Cardiac septum (tissue), 1 donor: ENCODE measurements at regions of chr11 and their contacts with region 1.

Region 1: DNA sequence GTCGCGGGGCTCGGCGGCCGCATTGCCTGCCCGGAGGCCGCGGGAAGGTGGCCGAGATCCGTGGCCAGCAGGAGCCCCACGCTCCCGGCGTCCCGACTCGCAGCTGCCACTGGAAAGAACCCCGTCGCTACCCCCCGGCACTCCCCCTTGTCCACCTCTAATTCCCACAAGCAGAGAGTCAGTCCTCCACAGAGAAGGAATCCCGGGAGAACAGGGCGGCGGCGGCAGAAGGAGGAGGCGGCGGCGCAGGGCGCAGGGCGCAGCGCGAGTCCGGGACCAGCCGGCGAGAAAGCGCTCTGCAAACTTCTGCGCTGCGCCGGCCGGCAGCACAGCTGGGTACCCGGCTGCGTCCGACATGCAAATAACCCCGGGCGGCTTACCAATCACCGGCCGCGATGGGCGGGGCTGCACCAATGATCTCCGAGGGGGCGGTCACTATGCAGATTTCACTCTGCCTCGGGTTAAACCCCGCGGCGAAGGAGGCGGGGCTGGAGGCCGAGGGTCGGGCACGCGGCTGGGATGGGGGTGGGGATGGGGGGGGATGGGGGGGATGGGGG is at the start of gene ABTB2:
- DNase-seq: peak; percentile 99
- total RNA-seq, gene ABTB2: 27.9 TPM

Region 2: GRCh38 chr11:33996498-33997454 is 361.0 kb before region 1 on chr11:
- intact Hi-C with region 1: loop called (anchors 2 kb)
- DNase-seq: no peak

Region 3: GRCh38 chr11:34051349-34052035 is 306.3 kb before region 1 on chr11 and contains the start of gene CAPRIN1:
- intact Hi-C with region 1: loop called (anchors 2 kb)
- DNase-seq: peak; percentile 94
- total RNA-seq, gene CAPRIN1: 108 TPM

Region 4: DNA sequence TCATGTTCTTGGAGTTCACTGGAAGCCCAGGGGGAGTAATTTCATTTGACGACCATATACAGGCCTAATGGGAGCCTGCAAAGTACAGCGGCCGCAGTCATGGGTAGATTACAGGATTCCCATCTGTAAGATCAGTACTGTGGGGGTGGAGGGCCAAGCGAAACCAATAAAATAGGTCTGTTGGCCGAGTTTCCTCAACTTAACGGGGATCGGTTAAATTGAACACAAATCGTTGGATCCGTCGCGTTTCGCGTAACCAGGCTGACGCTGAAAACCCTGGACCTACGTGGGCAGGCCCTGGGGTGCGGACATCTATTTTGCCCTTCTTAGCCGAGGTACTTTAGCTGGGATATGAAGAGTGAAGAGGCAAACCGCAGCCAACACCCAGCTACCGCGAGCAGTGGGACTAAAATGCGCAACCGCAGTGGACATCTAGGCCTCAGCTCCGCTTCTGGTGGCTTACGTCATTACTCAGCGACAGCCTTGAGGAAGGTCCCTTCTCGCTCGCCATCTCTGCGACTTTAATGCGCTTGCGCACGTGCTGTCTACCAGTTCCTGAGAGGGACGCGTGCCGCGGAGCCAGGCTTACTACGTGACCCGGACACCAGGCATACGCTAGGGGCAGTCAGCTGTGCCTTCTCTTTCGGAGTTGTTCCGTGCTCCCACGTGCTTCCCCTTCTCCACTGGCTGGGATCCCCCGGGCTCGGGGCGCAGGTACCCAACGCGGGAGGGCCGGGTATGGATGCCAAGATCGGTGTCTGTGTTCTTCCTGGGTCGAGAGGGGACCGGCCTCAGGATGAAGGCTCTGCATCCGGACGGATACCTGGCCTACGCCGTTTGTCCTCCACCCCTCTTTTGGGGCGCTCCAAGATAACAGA is 252.5 kb before region 1 on chr11 and contains the start of gene NAT10:
- intact Hi-C with region 1: loop called (anchors 5 kb)
- DNase-seq: peak; percentile 98
- total RNA-seq, gene NAT10: 23.2 TPM

Region 5: GRCh38 chr11:34174412-34175041 is 183.3 kb before region 1 on chr11:
- intact Hi-C with region 1: loop called (anchors 1 kb)
- DNase-seq: peak; percentile 89

Region 6: GRCh38 chr11:34243726-34244464 is 113.9 kb before region 1 on chr11:
- intact Hi-C with region 1: loop called (anchors 5 kb)
- DNase-seq: no peak

Region 7: DNA sequence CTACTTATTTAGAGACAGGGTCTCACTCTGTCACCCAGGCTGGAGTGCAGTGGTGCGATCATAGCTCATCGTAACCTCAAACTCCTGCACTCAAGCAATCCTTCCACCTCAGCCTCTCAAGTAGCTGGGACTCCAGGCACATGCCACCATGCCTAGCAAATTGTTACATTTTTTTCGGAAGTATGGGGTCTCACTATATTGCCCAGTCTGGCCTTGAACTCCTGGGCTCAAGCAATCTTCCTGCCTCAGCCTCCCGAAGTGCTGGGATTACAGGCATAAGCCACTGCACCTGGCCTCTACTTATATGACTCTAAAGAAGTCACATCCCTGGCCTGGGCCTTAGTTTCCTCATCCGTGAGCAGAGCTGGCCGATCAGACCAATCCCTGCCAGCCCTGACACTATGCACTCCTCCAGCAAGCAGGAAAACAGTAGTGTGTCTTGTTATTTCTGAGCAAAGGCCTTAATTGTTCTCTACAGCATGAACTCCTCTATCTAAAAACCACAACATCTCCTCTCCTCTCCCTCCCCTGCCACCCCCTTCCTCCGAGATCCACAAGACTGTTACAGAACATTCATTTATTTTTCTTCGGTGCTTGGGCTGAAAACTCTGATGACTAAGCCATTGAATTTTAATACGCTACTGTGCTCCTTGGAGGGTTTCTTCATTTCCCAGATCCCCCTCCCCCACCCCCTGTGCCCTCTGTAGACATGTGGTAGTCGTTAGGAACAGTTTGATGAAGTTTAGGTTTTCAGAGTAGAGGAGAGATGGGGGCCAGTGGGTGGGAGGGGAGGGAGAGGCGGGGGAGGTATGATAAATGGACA is 91.5 kb before region 1 on chr11:
- intact Hi-C with region 1: loop called (anchors 5 kb)
- DNase-seq: no peak

Region 8: DNA sequence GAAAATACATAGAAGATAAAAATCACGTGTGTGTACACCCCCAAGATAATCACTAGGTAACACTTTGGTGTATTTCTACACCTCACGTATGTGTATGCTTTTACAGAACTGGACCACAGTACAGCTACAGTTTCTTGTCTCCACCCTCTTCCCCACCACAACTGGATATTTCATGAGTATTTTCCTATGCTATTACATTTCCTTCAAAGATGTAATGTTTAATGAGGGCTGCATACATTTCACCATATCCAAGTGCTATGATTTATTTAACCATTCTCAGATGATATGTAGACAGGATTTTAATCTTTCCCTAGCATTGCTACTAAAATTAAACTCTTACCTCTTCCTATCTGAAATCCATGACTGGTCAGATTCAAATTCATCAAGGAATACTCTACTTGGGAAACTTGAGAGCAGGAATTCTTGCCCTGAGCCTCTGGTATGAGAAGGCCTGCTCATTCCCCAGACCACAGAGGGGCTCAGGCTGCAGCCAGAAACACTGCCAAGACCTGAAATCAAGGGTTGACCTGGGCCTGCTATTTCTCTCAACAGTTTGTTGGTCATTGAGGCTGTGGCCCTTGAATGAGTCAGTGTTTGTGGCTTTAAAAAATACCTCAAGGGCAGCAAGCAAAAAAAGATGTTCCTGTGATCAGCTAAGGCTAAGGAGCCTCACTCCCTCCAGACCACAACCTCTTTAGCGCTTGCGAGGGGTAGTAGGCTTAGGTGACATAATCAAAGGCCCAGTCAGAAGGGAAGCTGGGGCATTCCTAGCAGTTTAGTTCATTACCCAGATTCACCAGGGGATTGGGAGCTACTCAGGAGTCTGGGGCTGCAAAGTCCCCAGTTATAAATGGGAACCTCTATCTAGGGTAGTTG is 55.5 kb before region 1 on chr11:
- intact Hi-C with region 1: no loop called
- DNase-seq: no peak